ENCODE measurements at regions of chr17 and their contacts with region 1.

Region 1: GRCh38 chr17:41648411-41649195 is 24.2 kb upstream of the KRT17 start:
- DNase-seq: peak; percentile 76
- H3K4me3 Mint-ChIP-seq: peak overlapping the region; percentile 73
- H3K27ac Mint-ChIP-seq: peak overlapping the region; percentile 52
- H3K4me1 Mint-ChIP-seq: peaks cover 10% of the 10 kb centered on the region
- H3K27me3 Mint-ChIP-seq: peaks cover 2% of the 10 kb centered on the region

Region 2: DNA sequence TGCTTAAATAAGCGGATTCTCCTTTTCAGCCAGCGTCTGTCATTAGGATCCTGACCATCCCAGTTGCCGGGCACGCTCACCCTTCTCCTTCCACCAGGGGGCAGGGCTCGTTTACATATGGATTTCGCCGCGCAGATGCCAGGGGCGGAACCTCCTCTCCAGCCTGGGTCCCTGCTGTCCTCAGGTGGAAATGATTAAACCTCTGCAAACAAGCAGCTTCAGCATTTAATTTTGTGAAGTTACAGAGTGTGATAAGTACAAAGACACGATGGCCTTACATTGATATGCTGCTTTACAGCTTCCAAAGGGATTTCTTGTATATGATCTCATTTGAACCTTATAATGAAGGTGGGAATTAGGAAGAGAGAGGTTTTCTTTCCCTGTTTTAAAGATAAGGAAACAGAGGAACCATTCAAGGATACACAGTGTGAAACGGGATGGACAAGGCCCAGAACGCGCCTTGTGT is 845.0 kb before region 1 on chr17:
- intact Hi-C with region 1: loop called (anchors 1 kb)
- DNase-seq: peak; percentile 49
- H3K4me3 Mint-ChIP-seq: no peak overlapping the region
- H3K27ac Mint-ChIP-seq: no peak overlapping the region
- H3K4me1 Mint-ChIP-seq: no peaks in the 10 kb centered on the region
- H3K27me3 Mint-ChIP-seq: peaks cover 39% of the 10 kb centered on the region

Region 3: DNA sequence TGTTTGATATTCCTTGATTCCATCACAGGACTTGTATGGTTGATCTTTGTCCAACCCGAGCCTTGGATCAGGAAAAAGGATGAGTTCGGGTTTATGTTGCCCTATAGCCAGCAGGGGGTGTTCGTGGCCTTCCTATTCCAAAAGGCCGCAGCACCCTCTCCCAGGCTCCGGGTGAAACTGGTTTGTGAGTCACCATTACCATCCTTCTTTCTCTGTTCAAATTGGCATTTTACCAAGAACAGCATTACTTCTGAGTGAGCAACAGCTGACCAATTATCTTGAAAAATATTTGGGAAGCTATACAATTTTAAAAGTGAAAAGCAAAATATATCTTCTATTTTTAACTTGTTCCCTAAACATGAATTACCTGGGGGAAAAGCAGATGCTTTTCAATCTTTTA is 739.3 kb before region 1 on chr17:
- intact Hi-C with region 1: loop called (anchors 1 kb)
- DNase-seq: peak; percentile 29
- H3K4me3 Mint-ChIP-seq: no peak overlapping the region
- H3K27ac Mint-ChIP-seq: no peak overlapping the region
- H3K4me1 Mint-ChIP-seq: no peaks in the 10 kb centered on the region
- H3K27me3 Mint-ChIP-seq: peaks cover 26% of the 10 kb centered on the region

Region 4: GRCh38 chr17:41548844-41549595 is 99.6 kb before region 1 on chr17:
- intact Hi-C with region 1: loop called (anchors 1 kb)
- DNase-seq: peak; percentile 74
- H3K4me3 Mint-ChIP-seq: no peak overlapping the region
- H3K27ac Mint-ChIP-seq: peak overlapping the region; percentile 31
- H3K4me1 Mint-ChIP-seq: peaks cover 21% of the 10 kb centered on the region
- H3K27me3 Mint-ChIP-seq: peaks cover 10% of the 10 kb centered on the region

Region 5: GRCh38 chr17:41593311-41593981 is 55.2 kb before region 1 on chr17:
- intact Hi-C with region 1: loop called (anchors 5 kb)
- DNase-seq: no peak
- H3K4me3 Mint-ChIP-seq: no peak overlapping the region
- H3K27ac Mint-ChIP-seq: no peak overlapping the region
- H3K4me1 Mint-ChIP-seq: no peaks in the 10 kb centered on the region
- H3K27me3 Mint-ChIP-seq: peaks cover 6% of the 10 kb centered on the region

Measured in activated T-helper 1 cell treated with anti-CD3 and anti-CD28 coated beads, Interleukin-12 subunit alpha, Interleukin-12 subunit beta, Interleukin-2, Interleukin-4 antibody, amounts not matched to agents 30 ng/mL and 10 ng/mL and 1 ng/mL, durations not matched to agents 14 hours and 24 hours and 36 hours (primary cell).